Activated CD4-positive, alpha-beta T cell treated with anti-CD3 and anti-CD28 coated beads for 36 hours (primary cell): ENCODE measurements at regions of chr11 and their contacts with region 1.

Region 1: GRCh38 chr11:506238-506994 is 626 bp downstream of the RNH1 start:
- DNase-seq: peak; percentile 99
- ATAC-seq: peak; percentile 78
- H3K4me3 Mint-ChIP-seq: peak overlapping the region; percentile 93
- H3K27ac Mint-ChIP-seq: peak overlapping the region; percentile 99
- H3K4me1 Mint-ChIP-seq: peaks cover 22% of the 10 kb centered on the region
- H3K27me3 Mint-ChIP-seq: no peaks in the 10 kb centered on the region

Region 2: DNA sequence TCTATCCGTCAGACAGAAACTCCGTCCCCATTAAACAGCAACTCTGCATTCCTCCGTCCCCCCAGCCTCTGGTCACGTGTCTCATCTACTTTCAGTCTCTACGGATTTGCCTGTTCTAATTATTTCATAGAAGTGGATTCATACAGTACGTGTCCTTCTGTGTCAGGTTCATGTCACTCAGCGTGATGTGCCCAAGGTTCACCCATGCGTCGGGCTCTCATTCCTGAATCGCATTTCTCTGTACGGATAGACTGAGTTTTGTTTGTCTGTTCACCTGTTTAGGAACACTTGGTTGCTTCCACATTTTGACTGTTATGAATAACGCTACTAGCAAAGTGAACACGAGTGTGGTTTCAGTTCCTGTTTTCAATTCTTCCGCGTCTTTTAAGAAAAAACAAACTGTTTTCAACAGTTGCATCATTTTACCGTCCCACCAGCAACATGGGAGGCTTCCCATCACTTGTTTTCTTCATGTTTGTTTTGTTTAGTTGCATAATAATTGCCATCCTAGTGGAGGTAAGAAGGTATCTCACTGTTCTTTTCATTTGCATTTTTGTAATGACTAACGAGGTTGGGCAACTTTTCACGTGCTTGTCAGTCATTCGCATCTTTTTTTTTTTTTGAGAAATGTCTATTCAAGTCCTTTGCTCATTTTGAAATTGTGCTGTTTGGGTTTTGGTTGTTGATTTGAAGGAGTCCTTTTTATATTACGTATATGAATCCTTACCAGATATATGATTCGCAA is 237.1 kb before region 1 on chr11:
- CTCF ChIA-PET with region 1: no interaction called
- POLR2A ChIA-PET with region 1: no interaction called
- intact Hi-C with region 1: loop called in 1 of 2 experiments (anchors 1 kb)
- DNase-seq: peak; percentile 72
- ATAC-seq: peak; percentile 71
- H3K4me3 Mint-ChIP-seq: peak overlapping the region; percentile 79
- H3K27ac Mint-ChIP-seq: peak overlapping the region; percentile 99
- H3K4me1 Mint-ChIP-seq: peaks cover 43% of the 10 kb centered on the region
- H3K27me3 Mint-ChIP-seq: no peaks in the 10 kb centered on the region

Region 3: GRCh38 chr11:416757-417621 is 89.4 kb before region 1 on chr11:
- CTCF ChIA-PET with region 1: no interaction called
- POLR2A ChIA-PET with region 1: no interaction called
- intact Hi-C with region 1: loop called in 1 of 2 experiments (anchors 2 kb)
- DNase-seq: peak; percentile 60
- ATAC-seq: peak; percentile 20
- H3K4me3 Mint-ChIP-seq: peak overlapping the region; percentile 85
- H3K27ac Mint-ChIP-seq: no peak overlapping the region
- H3K4me1 Mint-ChIP-seq: peaks cover 32% of the 10 kb centered on the region
- H3K27me3 Mint-ChIP-seq: no peaks in the 10 kb centered on the region

Region 4: DNA sequence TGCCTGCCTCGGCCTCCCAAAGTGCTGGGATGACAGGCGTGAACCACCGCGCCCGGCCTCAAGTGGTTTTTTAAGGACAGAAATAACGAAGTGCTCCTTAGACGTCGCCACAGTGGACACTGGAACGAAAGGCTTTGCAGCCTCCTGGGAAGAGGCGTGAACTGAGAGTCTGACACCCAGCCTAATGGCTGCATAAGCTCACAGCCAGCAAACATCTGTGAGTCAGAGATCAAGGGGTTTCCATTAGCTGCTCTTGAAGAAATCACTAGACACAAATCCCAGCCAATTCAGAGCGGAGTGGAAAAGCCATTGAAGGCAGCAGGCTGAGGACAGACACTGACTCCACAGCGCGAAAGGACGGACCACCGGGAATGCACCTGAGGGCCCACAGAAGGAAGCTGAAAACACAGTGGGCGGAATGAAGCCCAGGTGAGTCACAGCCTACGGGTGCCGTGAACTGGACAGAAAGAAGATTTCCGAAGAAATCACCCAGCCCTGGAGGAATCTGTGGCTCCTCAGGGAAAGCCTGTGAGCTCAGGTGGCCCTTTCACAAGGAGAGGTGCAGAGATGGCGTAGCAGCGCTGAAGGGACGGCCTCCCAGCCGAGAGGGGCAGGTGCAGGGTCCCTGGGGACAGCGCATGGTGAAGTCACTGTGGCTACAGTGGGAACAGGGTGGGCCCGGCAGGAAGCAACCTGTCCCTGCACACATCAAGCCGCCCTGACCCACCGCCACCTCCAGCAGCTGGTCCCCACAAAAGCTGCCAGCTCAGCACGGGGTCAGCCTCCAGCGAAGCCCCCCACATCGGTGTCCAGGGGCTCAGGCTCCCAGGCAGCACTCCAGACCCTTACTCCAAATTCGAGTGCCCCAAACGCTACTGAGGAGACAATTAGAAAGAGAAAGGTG is 42.5 kb after region 1 on chr11:
- CTCF ChIA-PET with region 1: no interaction called
- POLR2A ChIA-PET with region 1: no interaction called
- intact Hi-C with region 1: no loop called
- DNase-seq: no peak
- ATAC-seq: no peak
- H3K4me3 Mint-ChIP-seq: no peak overlapping the region
- H3K27ac Mint-ChIP-seq: no peak overlapping the region
- H3K4me1 Mint-ChIP-seq: no peaks in the 10 kb centered on the region
- H3K27me3 Mint-ChIP-seq: no peaks in the 10 kb centered on the region

Region 5: GRCh38 chr11:560305-561147 is 54.1 kb after region 1 on chr11 and contains the starts of genes LMNTD2 and RASSF7:
- CTCF ChIA-PET with region 1: no interaction called
- POLR2A ChIA-PET with region 1: no interaction called
- intact Hi-C with region 1: loop called in 1 of 2 experiments (anchors 1 kb)
- DNase-seq: peak; percentile 97
- ATAC-seq: peak; percentile 93
- H3K4me3 Mint-ChIP-seq: peak within 1 kb of the TSS; percentile 85
- H3K27ac Mint-ChIP-seq: peak within 1 kb of the TSS; percentile 72
- H3K4me1 Mint-ChIP-seq: peaks cover 8% of the 10 kb centered on the region
- H3K27me3 Mint-ChIP-seq: peaks cover 2% of the 10 kb centered on the region
- total RNA-seq, gene LMNTD2: 2.7 to 4.9 TPM
- total RNA-seq, gene RASSF7: 16.8 TPM

Region 6: DNA sequence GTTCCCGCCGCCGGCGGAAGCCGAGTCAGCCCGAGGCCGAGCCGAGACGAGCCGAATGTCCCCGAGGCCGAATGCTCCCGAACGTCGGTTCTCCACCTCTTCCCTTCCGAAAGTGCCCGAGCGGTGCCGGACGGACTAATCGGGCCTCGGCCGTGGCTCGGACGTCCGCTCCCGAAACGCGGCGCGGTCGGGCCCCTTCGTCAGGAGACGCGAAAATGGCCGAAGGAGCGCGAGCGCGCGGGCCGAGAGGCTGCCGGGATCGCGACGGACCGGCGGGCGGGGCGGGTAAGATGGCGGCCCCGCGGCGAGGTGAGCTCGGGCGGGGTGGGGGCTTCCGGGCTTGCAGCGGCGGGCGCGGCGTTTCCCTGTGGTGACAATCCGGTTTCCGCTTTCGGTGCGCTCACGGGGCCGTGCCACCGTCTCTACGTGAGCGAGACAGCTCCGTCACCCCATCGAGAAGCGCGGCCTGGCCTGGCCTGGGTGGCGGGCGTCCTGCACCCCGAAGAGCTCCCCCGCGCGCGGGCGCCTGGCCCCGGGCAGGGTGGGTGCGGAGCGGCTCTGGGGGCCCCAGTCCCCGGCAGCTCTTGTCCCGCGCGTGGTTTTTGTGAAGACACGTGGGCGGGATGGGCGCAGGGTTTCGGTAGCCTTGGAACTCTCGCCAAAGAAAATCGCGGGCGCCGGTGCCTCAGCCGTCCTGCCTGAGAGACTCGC is 189.3 kb after region 1 on chr11 and contains the start of gene TMEM80:
- CTCF ChIA-PET with region 1: interaction called, 3 read pairs
- POLR2A ChIA-PET with region 1: no interaction called
- intact Hi-C with region 1: loop called in 1 of 2 experiments (anchors 1 kb)
- DNase-seq: peak; percentile 99
- ATAC-seq: peak; percentile 81
- H3K4me3 Mint-ChIP-seq: peak within 1 kb of the TSS; percentile 84
- H3K27ac Mint-ChIP-seq: peak within 1 kb of the TSS; percentile 94
- H3K4me1 Mint-ChIP-seq: peaks cover 51% of the 10 kb centered on the region
- H3K27me3 Mint-ChIP-seq: no peaks in the 10 kb centered on the region
- total RNA-seq, gene TMEM80: 11.4 to 11.9 TPM

Region 7: DNA sequence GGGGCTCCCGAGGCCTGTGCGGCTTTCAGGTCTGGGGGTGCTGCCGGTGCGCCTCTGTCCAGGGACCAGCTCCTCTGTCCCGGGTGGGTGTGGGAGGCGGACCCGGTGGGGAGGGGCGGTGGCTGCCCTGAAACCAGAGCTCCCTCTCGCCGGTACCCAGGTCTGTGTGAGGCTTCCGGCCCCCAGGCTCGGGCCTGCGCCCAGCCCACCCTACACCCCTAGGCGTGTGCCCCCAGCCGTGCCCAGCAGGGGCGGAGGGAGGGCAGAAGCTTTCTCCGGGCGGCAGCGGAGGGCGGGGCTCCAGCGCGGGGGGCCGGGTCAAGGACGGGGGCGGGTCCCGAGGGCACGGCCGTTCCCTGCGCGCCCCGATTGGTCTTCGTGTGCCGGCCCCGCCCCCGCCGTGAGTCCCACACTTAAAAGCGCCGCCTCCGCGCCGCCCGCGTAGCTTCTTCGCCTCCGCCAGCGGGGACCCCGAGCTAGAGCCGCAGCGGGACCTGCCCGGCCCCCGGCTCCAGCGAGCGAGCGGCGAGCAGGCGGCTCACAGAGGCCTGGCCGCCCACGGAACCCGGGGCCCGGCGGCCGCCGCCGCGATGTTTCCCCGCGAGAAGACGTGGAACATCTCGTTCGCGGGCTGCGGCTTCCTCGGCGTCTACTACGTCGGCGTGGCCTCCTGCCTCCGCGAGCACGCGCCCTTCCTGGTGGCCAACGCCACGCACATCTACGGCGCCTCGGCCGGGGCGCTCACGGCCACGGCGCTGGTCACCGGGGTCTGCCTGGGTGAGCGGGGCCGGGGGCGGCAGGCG is 312.9 kb after region 1 on chr11:
- CTCF ChIA-PET with region 1: no interaction called
- POLR2A ChIA-PET with region 1: interaction called, 3 read pairs
- intact Hi-C with region 1: loop called in 1 of 2 experiments (anchors 1 kb)
- DNase-seq: peak; percentile 95
- ATAC-seq: peak; percentile 82
- H3K4me3 Mint-ChIP-seq: peak overlapping the region; percentile 72
- H3K27ac Mint-ChIP-seq: no peak overlapping the region
- H3K4me1 Mint-ChIP-seq: peaks cover 11% of the 10 kb centered on the region
- H3K27me3 Mint-ChIP-seq: no peaks in the 10 kb centered on the region

Region 8: GRCh38 chr11:2027708-2028107 is 1521.3 kb after region 1 on chr11:
- CTCF ChIA-PET with region 1: no interaction called
- POLR2A ChIA-PET with region 1: no interaction called
- intact Hi-C with region 1: no loop called
- DNase-seq: no peak
- ATAC-seq: no peak
- H3K4me3 Mint-ChIP-seq: no peak overlapping the region
- H3K27ac Mint-ChIP-seq: no peak overlapping the region
- H3K4me1 Mint-ChIP-seq: no peaks in the 10 kb centered on the region
- H3K27me3 Mint-ChIP-seq: no peaks in the 10 kb centered on the region